Activated CD8-positive, alpha-beta T cell treated with anti-CD3 and anti-CD28 coated beads, Interleukin-2, amount 10 ng/mL, durations not matched to agents 7 days and 5 days (primary cell): ENCODE measurements at regions of chr19 and their contacts with region 1.

Region 1: DNA sequence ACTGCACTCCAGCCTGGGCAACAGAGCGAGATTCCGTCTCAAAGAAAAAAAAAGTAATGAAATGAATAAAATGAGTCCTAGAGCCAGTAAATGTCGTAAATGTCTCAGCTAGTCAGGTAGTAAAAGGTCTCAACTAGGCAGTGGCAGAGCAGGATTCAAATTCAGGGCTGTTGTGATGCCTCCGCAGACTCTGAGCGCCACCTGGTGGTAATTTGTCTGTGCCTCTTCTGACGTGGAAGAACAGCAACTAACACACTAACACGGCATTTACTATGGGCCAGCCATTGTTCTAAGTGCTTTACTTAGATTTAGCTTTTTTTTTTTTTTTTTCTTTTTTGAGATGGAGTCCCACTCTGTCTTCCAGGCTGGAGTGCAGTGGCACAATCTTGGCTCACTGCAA is 30.2 kb downstream of the CYP2F1 start:
- DNase-seq: peak; percentile 92
- ATAC-seq: peak; percentile 96
- H3K4me3 Mint-ChIP-seq: no peak overlapping the region
- H3K27ac Mint-ChIP-seq: no peak overlapping the region
- H3K4me1 Mint-ChIP-seq: no peaks in the 10 kb centered on the region
- H3K27me3 Mint-ChIP-seq: peaks cover 7% of the 10 kb centered on the region

Region 2: DNA sequence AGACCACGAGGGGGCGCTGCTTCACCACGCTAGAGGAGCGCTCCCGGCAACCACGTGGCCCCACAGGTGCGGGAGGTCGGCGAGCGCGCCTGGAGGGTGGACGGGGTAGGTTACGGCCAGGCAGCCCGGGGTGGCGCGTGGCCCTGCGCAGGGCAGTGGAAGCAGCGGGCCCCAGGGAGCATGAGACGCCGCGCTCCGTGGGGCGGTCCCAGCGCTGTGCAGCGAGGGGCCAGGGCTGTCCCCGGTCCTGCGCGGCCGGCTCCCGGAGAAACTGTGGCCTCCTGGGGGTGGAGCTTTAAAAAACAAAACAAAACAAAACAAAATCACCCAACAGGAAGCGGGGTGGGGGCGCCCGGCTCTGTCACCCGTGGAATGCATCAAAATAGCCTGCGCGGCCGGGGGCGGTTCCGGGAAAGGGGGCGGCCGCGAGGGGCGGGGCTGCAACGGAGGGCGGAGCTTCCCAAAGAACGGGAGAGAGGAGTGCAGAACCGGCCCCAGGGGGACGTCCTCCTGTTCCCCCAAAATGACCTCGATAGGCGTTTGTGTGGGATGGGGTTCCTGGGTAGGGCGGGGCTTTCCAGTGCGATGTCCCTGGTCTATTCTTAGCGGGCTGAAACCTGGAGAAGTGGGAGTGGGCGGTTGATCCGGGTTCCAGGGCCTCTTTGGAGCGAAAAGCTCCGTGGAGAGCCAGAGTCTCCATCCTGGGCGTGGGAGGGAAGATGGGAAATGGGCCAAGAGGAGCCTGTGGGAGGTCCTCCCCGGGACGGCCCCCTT is 481.3 kb before region 1 on chr19:
- CTCF ChIA-PET with region 1: interaction called, 21 read pairs
- POLR2A ChIA-PET with region 1: no interaction called
- DNase-seq: peak; percentile 92
- ATAC-seq: peak; percentile 96
- H3K4me3 Mint-ChIP-seq: peak overlapping the region; percentile 78
- H3K27ac Mint-ChIP-seq: peak overlapping the region; percentile 81
- H3K4me1 Mint-ChIP-seq: peaks cover 7% of the 10 kb centered on the region
- H3K27me3 Mint-ChIP-seq: peaks cover 6% of the 10 kb centered on the region

Region 3: GRCh38 chr19:41123716-41124294 is 20.6 kb before region 1 on chr19:
- CTCF ChIA-PET with region 1: interaction called, 23 read pairs
- POLR2A ChIA-PET with region 1: no interaction called
- DNase-seq: no peak
- ATAC-seq: no peak
- H3K4me3 Mint-ChIP-seq: no peak overlapping the region
- H3K27ac Mint-ChIP-seq: peak overlapping the region; percentile 9
- H3K4me1 Mint-ChIP-seq: peaks cover 36% of the 10 kb centered on the region
- H3K27me3 Mint-ChIP-seq: peaks cover 13% of the 10 kb centered on the region